GM10248 (cell line): ENCODE measurements at regions of chr16 and their contacts with region 1.

Region 1: GRCh38 chr16:3266873-3267537 is 10.6 kb upstream of the MEFV start:
- DNase-seq: no peak
- CTCF ChIP-seq: peak; percentile 32

Region 2: DNA sequence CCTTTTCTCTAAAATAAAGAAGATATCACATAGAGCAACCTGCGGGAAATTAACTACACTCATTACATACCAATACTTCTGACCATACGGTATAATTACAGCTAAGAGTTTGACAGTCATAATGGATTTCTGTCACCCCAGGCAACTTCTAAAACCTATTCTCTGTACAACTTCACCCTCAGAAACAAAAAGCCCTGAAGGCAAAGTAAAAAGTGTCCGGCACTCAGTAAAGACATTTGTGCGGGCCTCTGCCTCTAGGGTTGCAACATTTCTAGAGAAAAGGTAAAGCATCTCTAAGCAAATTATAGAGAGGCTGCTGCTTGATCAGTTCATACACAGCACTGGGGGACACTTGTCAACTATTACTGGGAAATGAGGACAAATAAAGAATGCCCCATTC is 35.7 kb before region 1 on chr16:
- CTCF ChIA-PET with region 1: no interaction called
- POLR2A ChIA-PET with region 1: no interaction called
- DNase-seq: no peak
- CTCF ChIP-seq: no peak

Region 3: DNA sequence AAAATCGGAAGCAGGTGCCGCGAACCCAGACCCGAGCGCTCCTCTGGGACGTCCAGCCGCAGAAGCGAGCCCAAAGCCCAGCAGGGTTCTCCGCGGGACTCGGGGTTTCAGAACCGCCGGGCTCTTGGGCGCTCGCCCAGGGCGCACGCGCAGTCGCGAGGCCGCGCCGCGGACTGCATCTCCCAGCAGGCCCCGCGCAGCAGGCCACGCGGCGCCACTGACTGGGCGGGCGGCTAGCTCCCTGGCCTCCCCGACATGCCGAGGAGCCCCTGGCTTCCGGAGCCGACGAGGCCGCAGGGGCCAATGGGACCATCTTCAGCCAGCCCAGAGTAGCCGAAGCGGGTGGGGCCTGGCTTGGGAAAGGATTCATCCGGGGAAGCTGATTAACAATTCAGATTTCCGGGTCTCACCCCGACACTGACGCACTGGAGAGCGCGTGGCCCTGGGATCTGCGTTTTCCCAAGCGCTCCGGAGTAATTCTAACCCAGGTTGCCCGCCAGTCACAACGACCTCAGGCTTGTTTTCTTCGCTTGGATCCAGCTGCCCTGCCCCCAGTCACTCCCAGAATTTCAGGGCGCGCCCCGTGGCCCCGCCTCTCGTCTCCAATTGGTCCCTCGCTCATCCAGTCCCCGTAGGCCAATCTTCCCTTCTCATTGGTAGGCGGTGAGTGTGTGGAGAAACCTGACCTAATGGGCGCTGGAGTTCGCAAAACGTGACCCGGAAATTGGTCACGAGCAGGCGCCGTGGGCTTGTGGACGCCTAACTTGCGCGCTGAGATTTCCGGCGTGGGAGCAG is 15.9 kb after region 1 on chr16 and contains the start of gene ZNF263:
- CTCF ChIA-PET with region 1: interaction called, 11 read pairs
- POLR2A ChIA-PET with region 1: interaction called, 4 read pairs
- DNase-seq: peak; percentile 97
- CTCF ChIP-seq: no peak

Region 4: DNA sequence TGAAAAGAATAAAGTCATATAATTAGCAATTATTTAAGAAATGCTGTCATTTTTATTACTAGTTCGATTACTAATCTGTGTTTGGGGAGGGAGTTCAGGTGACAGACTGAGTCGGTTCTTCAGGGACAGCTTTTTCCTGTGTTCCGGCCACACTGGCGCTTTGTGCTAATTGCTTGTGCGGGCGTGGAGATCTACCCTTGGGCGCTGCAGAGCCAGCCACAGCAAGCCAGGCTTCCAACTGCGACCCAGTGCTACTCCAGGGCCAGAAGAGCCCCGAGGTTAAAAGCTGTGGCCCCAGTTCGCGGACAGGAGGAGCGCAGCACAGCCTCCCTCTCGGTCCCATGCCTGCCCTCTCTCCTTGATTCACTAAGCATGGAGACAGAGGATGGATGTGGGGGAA is 82.2 kb after region 1 on chr16:
- CTCF ChIA-PET with region 1: no interaction called
- POLR2A ChIA-PET with region 1: no interaction called
- DNase-seq: no peak
- CTCF ChIP-seq: no peak